ENCODE measurements at regions of chr3 and their contacts with region 1.

Region 1: GRCh38 chr3:14402304-14402811 is at the start of gene SLC6A6:
- DNase-seq: peak; percentile 93
- ATAC-seq: peak; percentile 76
- H3K4me3 Mint-ChIP-seq: peak within 1 kb of the TSS; percentile 98
- H3K27ac Mint-ChIP-seq: peak within 1 kb of the TSS; percentile 95
- H3K4me1 Mint-ChIP-seq: peaks cover 43% of the 10 kb centered on the region
- H3K27me3 Mint-ChIP-seq: peaks cover 5% of the 10 kb centered on the region
- total RNA-seq, gene SLC6A6: 39.8 to 42.6 TPM

Region 2: GRCh38 chr3:14377348-14378169 is 24.8 kb before region 1 on chr3:
- POLR2A ChIA-PET with region 1: interaction called, 20 read pairs
- DNase-seq: peak; percentile 60
- ATAC-seq: peak; percentile 98
- H3K4me3 Mint-ChIP-seq: peak overlapping the region; percentile 58
- H3K27ac Mint-ChIP-seq: peak overlapping the region; percentile 87
- H3K4me1 Mint-ChIP-seq: peaks cover 27% of the 10 kb centered on the region
- H3K27me3 Mint-ChIP-seq: peaks cover 5% of the 10 kb centered on the region

Region 3: DNA sequence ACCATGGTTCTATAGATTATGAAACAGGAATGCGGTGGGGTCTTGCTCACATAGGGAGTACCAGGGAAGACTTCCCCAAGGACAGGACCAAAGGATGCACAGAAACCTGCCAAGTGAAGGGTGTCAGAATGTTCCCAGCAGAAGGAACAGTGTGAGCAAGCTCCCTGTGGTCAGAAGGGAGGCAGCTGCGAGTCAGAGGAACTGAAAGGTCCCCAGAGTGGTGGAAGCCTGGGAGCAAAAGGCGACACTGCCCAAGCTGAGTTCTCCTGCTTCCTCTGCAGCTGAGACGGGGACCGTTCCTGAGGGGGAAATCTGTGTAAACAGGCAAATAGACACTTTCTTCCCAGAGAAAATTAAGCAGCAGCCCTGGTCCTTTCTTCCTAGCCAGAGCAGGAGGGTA is 14.2 kb before region 1 on chr3:
- POLR2A ChIA-PET with region 1: no interaction called
- DNase-seq: no peak
- ATAC-seq: no peak
- H3K4me3 Mint-ChIP-seq: no peak overlapping the region
- H3K27ac Mint-ChIP-seq: no peak overlapping the region
- H3K4me1 Mint-ChIP-seq: peaks cover 1% of the 10 kb centered on the region
- H3K27me3 Mint-ChIP-seq: peaks cover 16% of the 10 kb centered on the region

Region 4: DNA sequence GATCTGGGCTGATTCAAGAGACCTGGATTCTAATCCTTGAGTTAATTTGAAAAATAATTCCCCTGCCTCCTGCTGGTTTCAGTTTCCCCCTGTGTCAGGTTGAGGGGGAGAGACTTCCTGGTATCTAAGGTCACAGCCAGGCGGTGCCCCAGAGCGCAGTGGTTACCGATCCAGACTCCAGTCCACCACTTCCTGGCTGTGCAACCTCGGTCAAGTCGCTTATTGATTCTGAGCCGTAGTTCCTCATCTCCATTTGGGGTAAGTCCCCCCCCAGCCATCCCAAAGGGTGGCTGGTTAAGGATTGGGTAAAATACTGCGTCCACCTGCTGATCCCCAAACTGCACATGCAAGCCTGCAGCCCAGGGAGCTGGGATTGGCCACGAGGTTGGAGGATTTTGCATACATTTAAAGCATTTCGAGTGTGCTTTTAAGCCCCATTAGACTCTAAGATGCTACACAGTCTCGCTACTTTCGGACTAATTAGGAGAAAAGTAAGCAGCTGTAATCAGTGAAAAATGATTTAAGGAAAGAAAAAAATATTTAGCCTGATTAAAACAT is 23.8 kb after region 1 on chr3:
- POLR2A ChIA-PET with region 1: interaction called, 61 read pairs
- DNase-seq: peak; percentile 64
- ATAC-seq: peak; percentile 84
- H3K4me3 Mint-ChIP-seq: peak overlapping the region; percentile 79
- H3K27ac Mint-ChIP-seq: peak overlapping the region; percentile 90
- H3K4me1 Mint-ChIP-seq: peaks cover 82% of the 10 kb centered on the region
- H3K27me3 Mint-ChIP-seq: no peaks in the 10 kb centered on the region

Region 5: GRCh38 chr3:14431892-14432834 is 29.8 kb after region 1 on chr3:
- POLR2A ChIA-PET with region 1: interaction called, 61 read pairs
- DNase-seq: peak; percentile 89
- ATAC-seq: peak; percentile 95
- H3K4me3 Mint-ChIP-seq: peak overlapping the region; percentile 87
- H3K27ac Mint-ChIP-seq: peak overlapping the region; percentile 99
- H3K4me1 Mint-ChIP-seq: peaks cover 71% of the 10 kb centered on the region
- H3K27me3 Mint-ChIP-seq: no peaks in the 10 kb centered on the region

Measured in activated naive CD8-positive, alpha-beta T cell treated with anti-CD3 and anti-CD28 coated beads, Interleukin-2, amount 10 ng/mL, durations not matched to agents 7 days and 5 days (primary cell).